Sigmoid colon (tissue), 7 donors: ENCODE measurements at regions of chr12 and their contacts with region 1.

Region 1: DNA sequence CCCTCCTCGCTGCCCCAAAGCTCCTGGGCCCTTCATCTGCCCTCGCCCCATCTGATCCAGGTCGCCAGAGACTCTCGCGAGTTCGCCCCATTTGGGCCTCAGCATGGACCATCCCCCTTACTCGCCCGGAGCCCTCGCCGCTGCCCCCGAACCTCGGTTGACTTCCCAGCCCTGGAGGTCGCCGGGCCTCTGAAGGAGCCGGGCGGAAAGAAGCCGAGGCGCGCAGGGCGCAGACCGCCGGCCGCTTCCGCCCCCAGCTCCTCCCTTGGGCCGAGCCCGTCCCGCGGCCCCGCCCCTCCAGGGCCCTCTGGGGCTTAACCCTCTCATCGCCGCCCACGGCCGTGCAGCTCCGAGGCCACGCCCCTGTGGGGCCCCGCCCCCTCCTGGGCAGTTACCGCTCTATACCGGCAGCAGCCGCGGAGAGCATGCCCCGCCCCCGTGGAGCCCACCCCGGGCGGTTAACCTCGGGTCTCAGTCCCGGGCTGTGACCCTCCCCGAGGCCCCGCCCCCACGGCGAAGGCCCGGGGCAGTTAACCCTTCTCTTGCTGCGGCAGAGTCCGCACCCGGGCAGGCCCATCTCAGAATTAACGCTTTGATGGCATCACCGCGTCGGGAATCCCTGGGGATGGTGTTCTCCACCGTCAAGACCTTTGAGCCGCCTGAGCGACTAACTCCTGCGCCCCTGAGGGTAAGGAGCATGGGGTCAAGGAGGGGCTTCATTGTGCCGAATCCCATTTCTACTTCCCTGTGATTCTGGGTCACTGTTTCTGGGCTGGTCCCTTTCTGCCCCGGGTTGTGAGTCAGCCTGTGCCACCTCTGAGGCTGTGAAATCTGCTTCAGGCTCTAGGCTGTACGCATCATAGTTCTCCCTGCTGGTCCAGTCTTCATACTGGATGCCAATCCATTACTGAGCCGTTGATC is at the start of gene SPSB2:
- DNase-seq: peak; percentile 99
- H3K4me3 ChIP-seq: peak within 1 kb of the TSS; percentile 62 to 85 (median 74)
- H3K27ac ChIP-seq: peak within 1 kb of the TSS; percentile 84 to 90 (median 88)
- H3K4me1 ChIP-seq: peaks cover 0 to 54% (median 41%) of the 10 kb centered on the region in 4 donors
- H3K27me3 ChIP-seq: no peaks in the 10 kb centered on the region
- CTCF ChIP-seq: no peak
- EP300 ChIP-seq: no peak
- POLR2A ChIP-seq: peak; percentile 72 to 74
- total RNA-seq, gene SPSB2: 4.6 to 10.5 (median 8.2) TPM

Region 2: DNA sequence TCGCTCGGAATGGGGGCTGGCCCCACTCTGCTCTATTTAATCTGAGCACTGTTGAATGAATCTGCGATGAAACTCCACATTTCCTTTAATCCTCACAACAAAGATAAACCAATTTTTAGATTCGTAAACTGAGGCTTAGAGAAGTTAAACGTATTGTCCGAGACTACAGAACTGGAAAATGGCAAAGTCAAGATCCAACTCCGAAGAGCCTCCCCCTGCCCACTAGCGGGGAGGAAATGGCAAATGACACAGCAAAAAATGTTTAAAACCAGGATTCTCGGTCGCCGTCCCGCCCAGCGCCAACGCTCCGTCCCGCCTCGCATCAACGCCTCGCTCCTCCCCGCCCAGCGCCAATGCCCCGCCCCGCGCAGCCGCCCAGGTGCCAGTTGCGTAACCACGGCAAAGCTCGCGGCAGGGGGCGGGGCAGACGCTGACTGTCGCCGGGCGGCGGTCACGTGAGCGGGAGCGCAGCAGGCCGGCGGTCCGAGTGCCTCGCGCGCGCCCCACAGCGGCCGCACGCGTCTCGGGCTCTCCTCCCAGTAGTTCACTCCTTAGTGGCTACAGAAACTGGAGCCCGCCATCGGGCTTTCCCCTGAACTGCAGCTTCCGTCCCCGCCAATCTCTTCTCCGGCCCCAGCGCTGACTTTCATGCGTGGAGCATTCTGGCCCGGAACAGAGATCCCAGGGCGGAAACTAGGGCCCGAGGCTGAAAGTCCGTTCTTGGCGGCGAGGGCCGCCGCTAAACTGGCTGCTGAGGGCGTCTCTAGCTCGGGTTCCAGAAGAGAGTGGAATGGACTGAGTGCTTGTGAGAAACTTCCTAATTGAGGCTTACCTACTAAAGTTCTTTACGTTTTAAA is 17.7 kb after region 1 on chr12:
- intact Hi-C with region 1: loop called (anchors 1 kb)
- DNase-seq: peak; percentile 98
- H3K4me3 ChIP-seq: peak overlapping the region; percentile 42 to 55 (median 48)
- H3K27ac ChIP-seq: peak overlapping the region; percentile 88 to 94 (median 90)
- H3K4me1 ChIP-seq: peaks cover 0 to 13% (median 6%) of the 10 kb centered on the region in 4 donors
- H3K27me3 ChIP-seq: no peaks in the 10 kb centered on the region
- CTCF ChIP-seq: peak; percentile 66 to 85 (median 74)
- EP300 ChIP-seq: peak in 1 of 4 donors; percentile 58
- POLR2A ChIP-seq: peak; percentile 55 to 76

Region 3: DNA sequence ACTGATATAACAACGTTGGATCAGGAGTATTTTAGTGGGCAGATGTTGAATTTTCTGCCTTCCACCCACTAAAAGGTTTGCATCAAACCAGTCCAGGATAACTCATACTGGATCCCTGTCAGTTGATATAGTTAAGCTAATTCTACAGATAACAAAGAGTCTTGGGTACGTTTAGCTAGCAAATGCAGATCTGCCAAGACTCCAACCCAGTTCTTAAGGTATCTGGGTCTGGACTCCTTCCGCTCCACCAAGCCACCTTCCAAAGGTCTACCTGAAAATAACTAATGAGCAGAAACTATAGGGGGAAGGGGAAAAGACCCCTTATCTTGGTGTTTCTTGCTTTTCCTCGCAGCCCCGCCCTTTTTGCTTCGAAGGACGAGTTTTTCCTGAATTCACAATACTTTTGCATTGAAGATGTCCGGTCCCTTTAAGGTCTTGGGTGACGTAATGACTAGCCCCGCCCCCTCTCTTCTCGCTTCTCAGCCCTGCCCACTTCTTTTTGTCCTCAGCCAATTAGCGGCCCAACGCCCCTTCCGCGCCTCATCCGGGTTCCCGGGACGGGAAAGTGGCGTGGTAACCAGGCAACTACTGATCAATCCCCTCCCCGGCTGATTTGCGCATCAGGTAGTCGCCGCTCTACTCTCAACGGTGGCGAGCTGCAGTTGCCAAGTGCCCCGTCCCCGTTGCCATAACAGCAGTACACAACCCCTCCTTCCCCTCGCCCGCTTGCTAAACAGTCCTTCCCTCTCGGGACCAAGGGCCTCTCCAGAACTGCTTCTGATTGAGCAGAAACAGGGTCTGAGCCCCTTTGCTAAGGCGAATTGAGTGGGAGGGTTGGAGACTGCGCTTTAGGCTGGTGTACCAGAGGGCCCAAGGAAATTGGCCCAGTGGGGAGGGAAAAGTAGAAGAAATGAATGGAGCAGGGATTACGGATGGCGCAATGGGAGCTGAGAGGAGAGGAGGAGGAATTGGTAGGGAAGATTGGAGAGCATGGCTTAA is 31.2 kb after region 1 on chr12 and contains the start of gene LRRC23:
- intact Hi-C with region 1: loop called (anchors 5 kb)
- DNase-seq: peak; percentile 99
- H3K4me3 ChIP-seq: peak within 1 kb of the TSS; percentile 46 to 77 (median 59)
- H3K27ac ChIP-seq: peak within 1 kb of the TSS; percentile 71 to 85 (median 84)
- H3K4me1 ChIP-seq: peaks cover 0 to 14% (median 11%) of the 10 kb centered on the region in 4 donors
- H3K27me3 ChIP-seq: no peaks in the 10 kb centered on the region
- CTCF ChIP-seq: no peak
- EP300 ChIP-seq: peak in 1 of 4 donors; percentile 60
- POLR2A ChIP-seq: peak; percentile 51 to 53
- total RNA-seq, gene LRRC23: 12.2 to 21.0 (median 13.5) TPM

Region 4: DNA sequence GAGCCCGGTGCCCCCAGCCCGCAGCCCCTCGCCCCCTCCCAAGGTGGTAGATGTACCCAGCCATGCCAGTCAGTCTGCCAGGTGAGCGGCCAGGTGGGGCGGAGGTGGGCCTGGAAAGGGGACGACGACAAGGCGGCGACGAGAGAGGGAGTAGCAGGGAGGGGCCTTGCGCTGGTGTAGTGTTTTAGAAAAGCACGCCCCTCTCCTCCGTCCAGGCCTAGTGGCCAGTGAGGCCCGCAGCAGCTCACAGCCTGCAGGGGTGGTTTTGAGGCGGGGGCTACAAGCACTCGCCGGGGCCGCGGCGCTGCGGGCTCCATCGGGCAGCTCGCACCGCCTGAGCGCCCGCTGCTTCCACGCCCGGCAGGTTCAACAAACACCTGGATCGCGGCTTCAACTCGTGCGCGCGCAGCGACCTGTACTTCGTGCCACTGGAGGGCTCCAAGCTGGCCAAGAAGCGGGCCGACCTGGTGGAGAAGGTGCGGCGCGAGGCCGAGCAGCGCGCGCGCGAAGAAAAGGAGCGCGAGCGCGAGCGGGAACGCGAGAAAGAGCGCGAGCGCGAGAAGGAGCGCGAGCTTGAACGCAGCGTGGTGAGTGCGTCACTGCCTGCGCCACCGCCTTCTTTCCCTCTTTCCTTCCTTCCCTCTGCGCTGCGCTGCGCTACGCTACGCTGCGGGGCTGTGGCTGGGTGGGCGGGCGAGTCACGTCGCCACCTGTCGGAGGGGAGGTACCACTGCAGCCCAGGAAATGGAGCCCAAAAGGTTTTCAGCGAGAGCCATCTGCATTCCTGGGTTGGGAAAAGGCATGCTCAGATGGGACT is 64.3 kb after region 1 on chr12:
- intact Hi-C with region 1: loop called (anchors 5 kb)
- DNase-seq: peak; percentile 97
- H3K4me3 ChIP-seq: peak overlapping the region; percentile 50 to 61 (median 56)
- H3K27ac ChIP-seq: peak overlapping the region; percentile 89 to 99 (median 94)
- H3K4me1 ChIP-seq: peaks cover 0 to 71% (median 61%) of the 10 kb centered on the region in 4 donors
- H3K27me3 ChIP-seq: no peaks in the 10 kb centered on the region
- CTCF ChIP-seq: peak; percentile 90 to 98 (median 94)
- EP300 ChIP-seq: peak in 1 of 4 donors; percentile 81
- POLR2A ChIP-seq: peak; percentile 15 to 60

Region 5: GRCh38 chr12:7060353-7060954 is 187.1 kb after region 1 on chr12 and contains the start of gene C1S:
- intact Hi-C with region 1: no loop called
- DNase-seq: peak; percentile 95
- H3K4me3 ChIP-seq: peak within 1 kb of the TSS; percentile 38 to 55 (median 50)
- H3K27ac ChIP-seq: peak within 1 kb of the TSS; percentile 81 to 87 (median 84)
- H3K4me1 ChIP-seq: peaks cover 0 to 30% (median 24%) of the 10 kb centered on the region in 4 donors
- H3K27me3 ChIP-seq: no peaks in the 10 kb centered on the region
- CTCF ChIP-seq: peak; percentile 82 to 99 (median 89)
- EP300 ChIP-seq: peak in 3 of 4 donors; percentile 21 to 72 (median 54)
- POLR2A ChIP-seq: peak; percentile 51 to 79
- total RNA-seq, gene C1S: 420 to 622 (median 463) TPM